Ascending aorta (tissue), 2 donors: ENCODE measurements at regions of chr17 and their contacts with region 1.

Region 1: DNA sequence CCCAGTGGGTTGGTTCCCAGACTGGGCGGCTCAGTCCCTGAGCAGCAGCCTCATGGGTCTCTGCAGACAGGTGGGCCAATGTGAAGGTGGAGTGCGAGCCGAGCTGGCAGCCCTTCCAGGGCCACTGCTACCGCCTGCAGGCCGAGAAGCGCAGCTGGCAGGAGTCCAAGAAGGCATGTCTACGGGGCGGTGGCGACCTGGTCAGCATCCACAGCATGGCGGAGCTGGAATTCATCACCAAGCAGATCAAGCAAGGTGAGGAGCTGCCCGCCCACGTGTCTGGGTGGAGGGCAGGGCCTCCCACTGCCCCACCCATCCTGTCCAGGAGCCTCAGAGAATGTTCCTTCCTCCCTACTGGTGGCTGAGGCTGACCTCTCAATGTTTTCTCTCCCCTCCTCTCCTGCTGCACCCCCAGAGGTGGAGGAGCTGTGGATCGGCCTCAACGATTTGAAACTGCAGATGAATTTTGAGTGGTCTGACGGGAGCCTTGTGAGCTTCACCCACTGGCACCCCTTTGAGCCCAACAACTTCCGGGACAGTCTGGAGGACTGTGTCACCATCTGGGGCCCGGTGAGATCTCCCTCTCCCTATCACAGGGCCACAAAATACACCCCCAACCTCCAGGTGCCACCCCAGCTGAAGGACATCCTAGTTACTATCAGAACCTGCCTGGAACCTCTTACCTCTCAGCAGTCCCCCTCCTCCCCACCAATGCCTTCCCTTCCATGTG is 44.3 kb downstream of the MRC2 start:
- DNase-seq: no peak
- H3K4me3 ChIP-seq: no peak overlapping the region
- H3K27ac ChIP-seq: no peak overlapping the region
- H3K4me1 ChIP-seq: peaks cover 7 to 15% of the 10 kb centered on the region in 2 donors
- H3K27me3 ChIP-seq: no peaks in the 10 kb centered on the region
- CTCF ChIP-seq: no peak

Region 2: GRCh38 chr17:62562656-62563055 is 109.1 kb before region 1 on chr17:
- intact Hi-C with region 1: loop called (anchors 10 kb)
- DNase-seq: no peak
- H3K4me3 ChIP-seq: no peak overlapping the region
- H3K27ac ChIP-seq: no peak overlapping the region
- H3K4me1 ChIP-seq: no peaks in the 10 kb centered on the region
- H3K27me3 ChIP-seq: no peaks in the 10 kb centered on the region
- CTCF ChIP-seq: no peak

Region 3: DNA sequence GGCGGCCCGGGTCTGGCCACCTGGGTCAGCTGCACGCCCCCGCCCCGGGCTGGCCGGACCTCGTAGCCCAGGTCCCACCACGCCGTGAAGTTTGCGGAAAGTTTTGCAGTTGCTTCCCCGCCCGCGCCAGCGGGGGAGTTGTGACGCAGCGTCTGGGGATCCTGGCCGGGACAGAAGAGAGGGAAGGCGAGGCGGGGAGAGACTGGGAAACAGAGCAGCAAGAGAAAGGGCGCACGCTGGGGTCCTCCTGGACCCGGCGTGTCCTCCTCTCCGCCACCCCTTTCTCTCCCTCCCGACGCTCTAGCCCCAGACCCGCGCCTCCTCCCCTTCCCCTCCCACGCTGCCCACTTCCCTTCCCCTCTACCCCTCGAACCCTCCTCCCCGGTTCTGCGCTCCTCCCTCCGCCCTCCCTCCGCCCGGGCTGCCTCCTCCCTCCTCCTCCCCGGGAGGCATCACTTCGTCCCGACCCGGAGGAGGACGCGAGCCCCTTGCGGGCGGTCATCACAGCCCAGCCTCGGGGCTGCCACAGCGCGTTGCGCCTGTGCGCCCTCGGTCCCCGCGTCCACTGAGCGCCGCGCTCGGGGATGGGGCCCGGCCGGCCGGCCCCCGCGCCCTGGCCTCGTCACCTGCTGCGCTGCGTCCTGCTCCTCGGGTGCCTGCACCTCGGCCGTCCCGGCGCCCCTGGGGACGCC is 44.4 kb before region 1 on chr17 and contains the start of gene MRC2:
- intact Hi-C with region 1: no loop called
- DNase-seq: peak in 1 of 2 donors; percentile 90
- H3K4me3 ChIP-seq: peak within 1 kb of the TSS; percentile 68 to 78
- H3K27ac ChIP-seq: peak within 1 kb of the TSS; percentile 83 to 98
- H3K4me1 ChIP-seq: peaks cover 3 to 13% of the 10 kb centered on the region in 2 donors
- H3K27me3 ChIP-seq: no peaks in the 10 kb centered on the region
- CTCF ChIP-seq: no peak
- total RNA-seq, gene MRC2: 147 TPM

Region 4: DNA sequence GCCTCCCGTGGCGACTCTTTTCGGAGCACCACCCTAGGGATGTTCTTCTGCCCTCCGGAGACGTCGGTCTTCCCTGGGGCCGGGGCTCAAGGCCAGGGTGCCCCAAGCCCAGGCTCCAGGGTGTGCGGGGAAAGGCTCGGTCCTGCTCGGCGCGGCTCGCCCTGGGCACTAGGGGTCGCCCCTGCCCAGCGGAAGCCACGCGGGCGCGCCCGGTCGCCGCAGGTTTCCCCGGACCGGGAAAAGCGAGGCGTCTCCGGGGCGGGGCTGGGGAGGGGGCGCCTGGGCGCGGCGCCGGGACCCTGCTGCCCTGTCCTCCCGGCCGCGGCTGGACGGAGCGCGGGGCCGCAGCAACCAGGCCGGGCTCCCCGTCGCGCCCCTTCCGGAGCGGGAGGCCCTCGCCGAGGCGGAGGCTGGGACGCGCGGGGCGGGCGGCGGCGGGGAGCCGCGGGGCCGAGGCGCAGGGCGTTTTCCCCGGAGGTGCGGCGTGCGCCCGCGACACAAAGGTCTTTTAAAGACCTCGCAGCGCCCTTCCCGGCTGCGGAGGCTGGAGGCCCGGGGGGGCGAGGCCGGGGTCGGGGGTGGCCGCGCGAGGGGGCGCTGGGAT is 32.1 kb after region 1 on chr17:
- intact Hi-C with region 1: no loop called
- DNase-seq: peak in 1 of 2 donors; percentile 85
- H3K4me3 ChIP-seq: peak overlapping the region; percentile 87 to 93
- H3K27ac ChIP-seq: peak overlapping the region; percentile 35 to 56
- H3K4me1 ChIP-seq: peaks cover 0 to 23% of the 10 kb centered on the region in 2 donors
- H3K27me3 ChIP-seq: no peaks in the 10 kb centered on the region
- CTCF ChIP-seq: peak; percentile 80 to 95 (median 84)